AG04450 (cell line): ENCODE measurements at regions of chr10 and their contacts with region 1.

Region 1: GRCh38 chr10:62244780-62245467 is 23.7 kb downstream of the RTKN2 start:
- DNase-seq: no peak
- H3K4me3 ChIP-seq: peak overlapping the region; percentile 11; the same call in 1 of the 2 replicates
- H3K27ac ChIP-seq: peak overlapping the region; percentile 32
- H3K27me3 ChIP-seq: no peaks in the 10 kb centered on the region
- CTCF ChIP-seq: peak; percentile 90

Region 2: GRCh38 chr10:62038609-62039190 is 206.2 kb before region 1 on chr10:
- CTCF ChIA-PET with region 1: interaction called, 68 read pairs
- POLR2A ChIA-PET with region 1: interaction called, 4 read pairs
- DNase-seq: no peak
- H3K4me3 ChIP-seq: no peak overlapping the region
- H3K27ac ChIP-seq: no peak overlapping the region
- H3K27me3 ChIP-seq: no peaks in the 10 kb centered on the region
- CTCF ChIP-seq: peak; percentile 90

Region 3: DNA sequence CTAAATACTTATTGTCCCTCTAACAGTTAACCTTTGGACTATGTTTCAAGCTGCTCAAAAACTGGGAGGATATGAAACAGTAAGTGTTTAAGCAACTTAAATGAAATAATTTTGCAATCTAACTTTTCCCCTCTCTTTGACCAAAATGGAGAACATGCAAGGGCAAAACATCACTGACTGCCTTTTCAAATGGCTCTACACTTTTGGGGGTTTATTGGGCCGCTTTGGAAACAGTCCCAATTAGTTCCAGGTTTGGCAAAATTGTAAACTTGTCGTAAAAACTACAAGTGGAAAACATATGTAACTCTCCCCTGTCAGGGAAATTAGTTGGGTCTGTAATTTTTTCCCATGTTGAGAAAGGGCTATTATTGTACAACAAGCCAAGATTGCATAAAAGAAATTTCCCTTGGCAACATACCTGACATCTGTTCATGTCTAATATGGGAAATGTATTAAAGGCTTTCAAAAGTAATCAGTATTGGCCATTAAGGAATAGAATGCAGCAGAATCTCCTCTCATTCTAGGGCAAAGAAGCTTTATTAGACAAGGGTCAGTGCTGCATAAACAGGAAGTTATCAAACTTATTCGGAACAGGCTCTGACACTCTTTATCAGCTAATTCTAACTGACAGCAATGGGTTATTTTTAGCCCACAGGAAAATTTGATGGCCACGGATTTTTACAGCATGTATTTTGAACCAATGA is 185.6 kb before region 1 on chr10:
- CTCF ChIA-PET with region 1: interaction called, 25 read pairs
- POLR2A ChIA-PET with region 1: interaction called, 5 read pairs
- DNase-seq: no peak
- H3K4me3 ChIP-seq: no peak overlapping the region
- H3K27ac ChIP-seq: no peak overlapping the region
- H3K27me3 ChIP-seq: no peaks in the 10 kb centered on the region
- CTCF ChIP-seq: no peak

Region 4: DNA sequence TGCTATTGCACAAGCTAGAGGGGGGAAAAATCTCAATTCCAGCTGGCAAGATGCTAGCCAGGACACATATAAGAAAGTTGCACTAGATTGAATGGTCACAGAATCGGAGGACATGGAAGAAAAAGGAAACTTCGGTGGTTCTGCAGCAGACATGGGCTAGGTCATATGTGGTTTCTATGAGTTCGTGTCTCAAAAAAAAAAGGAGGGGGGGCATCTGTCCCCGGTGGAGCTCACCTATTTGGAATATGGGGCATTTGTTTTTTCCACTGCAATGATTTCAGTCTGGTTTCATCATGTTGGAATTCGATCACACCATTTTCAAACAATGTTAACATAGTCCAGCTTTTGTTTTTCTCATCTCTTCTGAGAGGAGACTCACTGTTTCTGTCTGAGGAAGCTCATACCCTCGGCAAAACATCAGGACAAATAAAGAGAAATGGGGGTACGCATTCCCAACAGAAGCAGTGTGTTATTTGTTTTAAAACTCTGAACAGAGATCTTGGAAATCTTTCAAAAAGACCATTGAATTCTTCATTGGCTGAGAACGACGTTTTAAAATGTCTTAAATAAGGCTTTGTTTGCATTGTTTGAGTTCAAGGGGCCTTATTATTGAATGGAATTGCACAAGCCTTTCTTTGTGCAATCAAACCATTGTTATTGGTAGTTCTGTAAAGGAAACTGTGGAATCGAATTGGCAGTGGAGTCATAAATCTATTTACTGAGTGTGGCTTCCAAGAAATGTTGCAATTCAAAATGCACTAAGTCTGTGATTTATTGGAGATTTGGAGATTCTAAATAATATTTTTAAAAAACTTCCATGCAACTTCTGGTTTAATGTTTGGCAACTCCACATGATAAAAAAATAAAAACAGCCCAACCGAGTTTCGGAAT is 149.5 kb before region 1 on chr10:
- CTCF ChIA-PET with region 1: interaction called, 8 read pairs
- POLR2A ChIA-PET with region 1: interaction called, 16 read pairs
- DNase-seq: no peak
- H3K4me3 ChIP-seq: no peak overlapping the region
- H3K27ac ChIP-seq: peak overlapping the region; percentile 77
- H3K27me3 ChIP-seq: no peaks in the 10 kb centered on the region
- CTCF ChIP-seq: no peak

Region 5: GRCh38 chr10:62231371-62231770 is 13.6 kb before region 1 on chr10:
- CTCF ChIA-PET with region 1: interaction called, 15 read pairs
- POLR2A ChIA-PET with region 1: interaction called, 14 read pairs
- DNase-seq: peak; percentile 67
- H3K4me3 ChIP-seq: no peak overlapping the region
- H3K27ac ChIP-seq: no peak overlapping the region
- H3K27me3 ChIP-seq: no peaks in the 10 kb centered on the region
- CTCF ChIP-seq: no peak